SK-N-SH (cell line): ENCODE measurements at regions of chr21 and their contacts with region 1.

Region 1: GRCh38 chr21:34630536-34631143 is 15.7 kb upstream of the RCAN1 start:
- DNase-seq: peak; percentile 63
- H3K4me3 ChIP-seq: no peak overlapping the region; a peak in 1 of 4 replicates
- H3K27ac ChIP-seq: no peak overlapping the region
- H3K4me1 ChIP-seq: no peaks in the 10 kb centered on the region
- H3K27me3 ChIP-seq: peaks cover 51% of the 10 kb centered on the region
- CTCF ChIP-seq: peak; percentile 85
- EP300 ChIP-seq: no peak
- RAD21 ChIP-seq: peak; percentile 94

Region 2: GRCh38 chr21:34362136-34362444 is 268.6 kb before region 1 on chr21:
- CTCF ChIA-PET with region 1: interaction called, 31 read pairs
- POLR2A ChIA-PET with region 1: no interaction called
- DNase-seq: no peak
- H3K4me3 ChIP-seq: peak overlapping the region in 1 of 2 experiments; percentile 39; a peak in 1 of 4 replicates
- H3K27ac ChIP-seq: no peak overlapping the region
- H3K4me1 ChIP-seq: no peaks in the 10 kb centered on the region; a peak in 1 of 4 replicates
- H3K27me3 ChIP-seq: peaks cover 5% of the 10 kb centered on the region; the same call in 1 of the 2 replicates
- CTCF ChIP-seq: no peak
- EP300 ChIP-seq: no peak
- RAD21 ChIP-seq: no peak

Region 3: GRCh38 chr21:34367321-34367935 is 263.2 kb before region 1 on chr21:
- CTCF ChIA-PET with region 1: interaction called, 31 read pairs
- POLR2A ChIA-PET with region 1: no interaction called
- DNase-seq: peak; percentile 45
- H3K4me3 ChIP-seq: peak overlapping the region in 1 of 2 experiments; percentile 27; a peak in 1 of 4 replicates
- H3K27ac ChIP-seq: no peak overlapping the region
- H3K4me1 ChIP-seq: no peaks in the 10 kb centered on the region
- H3K27me3 ChIP-seq: no peaks in the 10 kb centered on the region; the same call in 1 of the 2 replicates
- CTCF ChIP-seq: peak; percentile 82
- EP300 ChIP-seq: no peak
- RAD21 ChIP-seq: peak; percentile 55

Region 4: DNA sequence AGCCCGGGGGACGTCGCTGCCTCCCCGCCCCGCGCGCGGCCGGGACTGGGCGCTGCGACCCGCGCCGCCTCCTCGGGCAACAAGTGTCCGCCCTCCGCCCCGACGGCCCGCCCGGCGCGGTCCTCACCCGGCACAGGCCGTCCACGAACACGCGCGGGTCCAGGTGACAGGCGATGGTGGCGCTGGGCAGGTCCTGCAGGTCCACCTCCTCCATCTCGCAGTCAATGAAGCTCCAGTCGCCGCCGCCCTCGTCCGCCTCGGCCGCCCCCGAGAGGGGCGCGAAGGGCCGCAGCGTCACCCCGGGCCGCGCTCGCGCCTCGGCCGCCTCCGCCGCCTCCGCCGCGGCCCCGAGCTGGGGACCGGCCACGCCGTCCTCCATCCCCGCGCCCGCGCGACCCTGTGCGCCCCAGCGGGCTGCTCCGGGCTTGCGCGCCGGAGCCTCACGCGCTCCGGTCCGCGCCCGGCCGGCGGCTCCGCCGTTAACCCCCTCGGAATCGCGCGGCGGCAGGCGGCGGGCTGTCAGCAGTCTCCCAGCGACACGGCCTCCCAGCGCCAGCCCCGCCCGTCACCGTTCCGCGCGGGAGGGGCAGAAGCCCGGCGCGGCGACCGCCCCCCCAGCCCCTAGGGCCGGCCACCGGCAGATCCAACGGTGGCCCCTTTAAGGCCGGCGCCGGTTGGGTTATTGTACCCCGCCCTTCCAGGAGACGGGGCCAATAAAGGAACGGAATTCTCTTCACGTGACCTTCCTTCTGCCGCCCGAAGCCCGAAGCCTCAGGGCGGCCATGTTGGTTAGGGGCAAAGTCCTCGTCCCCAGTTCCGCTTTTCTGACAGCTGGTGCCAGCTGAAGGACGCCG is 15.8 kb before region 1 on chr21 and contains the start of gene RCAN1:
- CTCF ChIA-PET with region 1: interaction called, 17 read pairs
- POLR2A ChIA-PET with region 1: no interaction called
- DNase-seq: peak; percentile 90
- H3K4me3 ChIP-seq: peak within 1 kb of the TSS; percentile 76 to 90
- H3K27ac ChIP-seq: peak within 1 kb of the TSS in 1 of 2 experiments; percentile 16; a peak in 2 of 4 replicates
- H3K4me1 ChIP-seq: peaks cover 0 to 6% of the 10 kb centered on the region in 2 experiments; a peak in 2 of 4 replicates
- H3K27me3 ChIP-seq: peaks cover 6% of the 10 kb centered on the region; the same call in 1 of the 2 replicates
- CTCF ChIP-seq: no peak
- EP300 ChIP-seq: no peak
- RAD21 ChIP-seq: no peak
- polyA plus RNA-seq, gene RCAN1: 16.7 and 22.0 TPM in 2 replicates

Region 5: GRCh38 chr21:34900376-34900775 is 269.7 kb after region 1 on chr21:
- CTCF ChIA-PET with region 1: no interaction called
- POLR2A ChIA-PET with region 1: no interaction called
- DNase-seq: no peak
- H3K4me3 ChIP-seq: no peak overlapping the region
- H3K27ac ChIP-seq: no peak overlapping the region
- H3K4me1 ChIP-seq: no peaks in the 10 kb centered on the region
- H3K27me3 ChIP-seq: no peaks in the 10 kb centered on the region
- CTCF ChIP-seq: no peak
- EP300 ChIP-seq: no peak
- RAD21 ChIP-seq: no peak